IMR-90 (cell line): ENCODE measurements at regions of chr5 and their contacts with region 1.

Region 1: DNA sequence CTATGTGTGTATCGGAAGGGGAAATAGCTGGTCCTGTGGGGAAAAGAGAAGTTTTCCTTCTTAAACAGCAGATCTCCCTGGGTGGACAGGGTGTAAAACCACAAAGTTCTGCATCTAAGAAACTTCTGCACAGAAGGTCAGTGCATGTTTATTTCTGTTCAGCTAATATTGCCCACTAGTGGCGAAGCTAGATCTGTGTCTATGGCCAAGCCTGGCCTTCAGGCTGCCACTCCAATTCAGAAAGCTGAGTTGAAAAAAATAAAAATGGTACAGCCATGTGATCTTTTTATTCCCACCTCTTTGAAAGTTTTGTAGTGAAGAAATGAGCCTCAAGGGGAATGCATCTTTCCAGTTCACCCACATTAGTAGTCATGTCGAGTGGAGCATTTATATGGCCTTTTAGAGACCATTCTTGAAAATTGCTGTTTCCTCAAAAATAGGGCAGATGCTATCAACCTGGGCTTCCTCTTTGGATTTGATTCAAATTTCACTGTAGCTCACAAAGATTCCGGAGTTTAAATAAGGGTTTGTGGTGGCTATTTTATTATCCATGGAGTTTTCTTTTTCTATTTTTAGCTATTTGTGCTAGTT is 488.0 kb downstream of the PRELID2 start:
- DNase-seq: peak; percentile 72
- ATAC-seq: peak; percentile 83
- H3K4me3 ChIP-seq: no peak overlapping the region
- H3K27ac ChIP-seq: no peak overlapping the region
- H3K4me1 ChIP-seq: peaks cover 13% of the 10 kb centered on the region
- H3K27me3 ChIP-seq: no peaks in the 10 kb centered on the region
- CTCF ChIP-seq: peak; percentile 67
- POLR2A ChIP-seq: no peak
- RAD21 ChIP-seq: peak; percentile 71

Region 2: GRCh38 chr5:144467792-144468191 is 879.3 kb before region 1 on chr5:
- CTCF ChIA-PET with region 1: interaction called, 9 read pairs
- POLR2A ChIA-PET with region 1: no interaction called
- dilution Hi-C with region 1: no loop called
- in situ Hi-C with region 1: no loop called
- intact Hi-C with region 1: loop called (anchors 1 kb)
- DNase-seq: peak; percentile 56
- ATAC-seq: peak; percentile 95
- H3K4me3 ChIP-seq: no peak overlapping the region
- H3K27ac ChIP-seq: no peak overlapping the region
- H3K4me1 ChIP-seq: no peaks in the 10 kb centered on the region
- H3K27me3 ChIP-seq: no peaks in the 10 kb centered on the region; the same call in 1 of the 2 replicates
- CTCF ChIP-seq: peak; percentile 72
- POLR2A ChIP-seq: no peak
- RAD21 ChIP-seq: peak; percentile 65

Region 3: GRCh38 chr5:144697847-144698262 is 649.3 kb before region 1 on chr5:
- CTCF ChIA-PET with region 1: interaction called, 5 read pairs
- POLR2A ChIA-PET with region 1: no interaction called
- dilution Hi-C with region 1: no loop called
- in situ Hi-C with region 1: no loop called
- intact Hi-C with region 1: loop called (anchors 10 kb)
- DNase-seq: peak; percentile 97
- ATAC-seq: peak; percentile 97
- H3K4me3 ChIP-seq: no peak overlapping the region
- H3K27ac ChIP-seq: no peak overlapping the region
- H3K4me1 ChIP-seq: peaks cover 2% of the 10 kb centered on the region; the same call in 1 of the 2 replicates
- H3K27me3 ChIP-seq: no peaks in the 10 kb centered on the region
- CTCF ChIP-seq: peak; percentile 36
- POLR2A ChIP-seq: no peak
- RAD21 ChIP-seq: peak; percentile 5; the same call in 1 of the 2 replicates

Region 4: GRCh38 chr5:145718956-145719355 is 371.8 kb after region 1 on chr5:
- CTCF ChIA-PET with region 1: no interaction called
- POLR2A ChIA-PET with region 1: no interaction called
- dilution Hi-C with region 1: no loop called
- in situ Hi-C with region 1: no loop called
- intact Hi-C with region 1: loop called (anchors 5 kb)
- DNase-seq: peak; percentile 65
- ATAC-seq: peak; percentile 80
- H3K4me3 ChIP-seq: no peak overlapping the region
- H3K27ac ChIP-seq: no peak overlapping the region
- H3K4me1 ChIP-seq: no peaks in the 10 kb centered on the region
- H3K27me3 ChIP-seq: no peaks in the 10 kb centered on the region
- CTCF ChIP-seq: peak; percentile 67
- POLR2A ChIP-seq: no peak
- RAD21 ChIP-seq: peak; percentile 73

Region 5: GRCh38 chr5:145764325-145764724 is 417.2 kb after region 1 on chr5:
- CTCF ChIA-PET with region 1: no interaction called
- POLR2A ChIA-PET with region 1: no interaction called
- dilution Hi-C with region 1: no loop called
- in situ Hi-C with region 1: no loop called
- intact Hi-C with region 1: no loop called
- DNase-seq: peak; percentile 45
- ATAC-seq: peak; percentile 63
- H3K4me3 ChIP-seq: no peak overlapping the region
- H3K27ac ChIP-seq: no peak overlapping the region
- H3K4me1 ChIP-seq: no peaks in the 10 kb centered on the region
- H3K27me3 ChIP-seq: no peaks in the 10 kb centered on the region
- CTCF ChIP-seq: no peak
- POLR2A ChIP-seq: no peak
- RAD21 ChIP-seq: no peak

Region 6: DNA sequence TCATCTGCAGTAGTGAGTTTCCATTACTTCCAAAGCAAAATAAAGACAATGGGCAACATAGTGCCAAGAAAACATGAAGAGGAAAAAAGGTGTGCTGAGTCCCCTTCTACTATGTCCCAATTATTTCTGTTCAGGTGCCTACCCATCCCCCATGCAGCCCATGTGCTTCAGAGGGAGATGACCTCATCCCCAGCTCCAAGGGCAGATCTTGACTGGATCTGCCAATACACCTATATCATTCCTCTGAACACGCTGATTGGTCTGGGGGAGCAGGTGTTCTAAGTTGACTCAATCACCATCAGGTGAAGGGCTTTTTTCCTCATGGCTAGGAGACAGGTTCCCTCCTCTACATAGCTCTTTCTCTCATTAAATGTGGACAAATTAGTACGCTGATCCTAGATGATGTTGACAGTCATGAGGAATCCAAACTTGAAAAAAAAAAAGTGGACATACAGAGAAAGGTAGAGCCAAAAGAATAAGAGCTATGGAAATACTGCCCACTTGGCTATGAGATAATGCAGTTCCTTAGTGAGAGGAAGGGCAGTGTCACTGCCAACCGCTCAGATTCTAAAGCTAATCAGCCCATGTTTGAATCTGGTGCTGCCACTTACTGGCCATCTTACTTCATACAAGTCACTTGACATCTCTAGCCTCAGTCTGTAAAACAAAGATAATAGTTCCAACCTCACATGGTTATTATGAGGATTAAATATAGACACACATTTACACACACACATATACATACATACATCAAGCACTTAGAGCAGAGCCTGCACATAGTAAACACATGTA is 464.9 kb after region 1 on chr5:
- CTCF ChIA-PET with region 1: no interaction called
- POLR2A ChIA-PET with region 1: no interaction called
- dilution Hi-C with region 1: no loop called
- in situ Hi-C with region 1: no loop called
- intact Hi-C with region 1: loop called (anchors 5 kb)
- DNase-seq: peak; percentile 48
- ATAC-seq: peak; percentile 82
- H3K4me3 ChIP-seq: no peak overlapping the region
- H3K27ac ChIP-seq: no peak overlapping the region
- H3K4me1 ChIP-seq: no peaks in the 10 kb centered on the region
- H3K27me3 ChIP-seq: no peaks in the 10 kb centered on the region
- CTCF ChIP-seq: peak; percentile 40
- POLR2A ChIP-seq: no peak
- RAD21 ChIP-seq: peak; percentile 52

Region 7: DNA sequence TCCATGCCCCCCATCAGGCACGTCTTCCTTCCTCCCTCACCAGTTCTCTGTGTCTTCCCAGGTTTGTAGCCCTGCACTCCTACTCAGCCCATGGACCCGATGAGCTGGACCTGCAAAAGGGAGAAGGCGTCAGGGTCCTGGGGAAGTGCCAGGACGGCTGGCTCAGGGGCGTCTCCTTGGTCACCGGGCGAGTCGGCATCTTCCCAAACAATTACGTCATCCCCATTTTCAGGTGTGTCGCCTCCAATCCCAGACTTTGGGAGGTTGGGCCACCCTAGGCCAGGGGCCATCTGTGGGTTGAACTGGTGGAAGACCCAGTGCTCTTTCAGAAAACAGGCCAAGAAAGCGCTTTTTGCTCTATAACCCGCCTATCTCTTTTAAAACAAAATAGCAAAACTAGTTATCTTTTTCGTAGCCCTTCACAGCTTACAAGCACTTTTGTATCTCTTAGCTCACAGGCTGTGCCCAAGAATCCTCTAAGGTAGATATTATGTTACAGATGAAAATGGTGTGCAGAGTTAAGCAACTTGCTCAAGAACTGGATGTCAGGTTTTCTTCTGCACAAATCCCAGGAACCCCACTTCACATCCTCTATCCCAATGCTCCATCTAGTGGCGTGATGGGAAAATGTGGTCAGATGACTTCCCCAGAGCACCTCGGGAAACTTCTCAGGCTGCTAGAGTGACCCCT is 702.0 kb after region 1 on chr5:
- CTCF ChIA-PET with region 1: no interaction called
- POLR2A ChIA-PET with region 1: no interaction called
- dilution Hi-C with region 1: no loop called
- in situ Hi-C with region 1: no loop called
- intact Hi-C with region 1: loop called (anchors 5 kb)
- DNase-seq: peak; percentile 84
- ATAC-seq: peak; percentile 92
- H3K4me3 ChIP-seq: no peak overlapping the region
- H3K27ac ChIP-seq: no peak overlapping the region
- H3K4me1 ChIP-seq: no peaks in the 10 kb centered on the region
- H3K27me3 ChIP-seq: no peaks in the 10 kb centered on the region
- CTCF ChIP-seq: peak; percentile 88
- POLR2A ChIP-seq: 0 out of 2 replicates have a peak, but pooled peaks have one; percentile 64
- RAD21 ChIP-seq: peak; percentile 96